ENCODE measurements at regions of chr19 and their contacts with region 1.

Region 1: GRCh38 chr19:47047763-47048405 is 540 bp downstream of the TMEM160 start:
- DNase-seq: peak; percentile 52
- ATAC-seq: peak; percentile 32
- H3K4me3 Mint-ChIP-seq: peak overlapping the region; percentile 95
- H3K27ac Mint-ChIP-seq: peak overlapping the region; percentile 89
- H3K4me1 Mint-ChIP-seq: peaks cover 15% of the 10 kb centered on the region
- H3K27me3 Mint-ChIP-seq: no peaks in the 10 kb centered on the region
- CTCF ChIP-seq: no peak

Region 2: DNA sequence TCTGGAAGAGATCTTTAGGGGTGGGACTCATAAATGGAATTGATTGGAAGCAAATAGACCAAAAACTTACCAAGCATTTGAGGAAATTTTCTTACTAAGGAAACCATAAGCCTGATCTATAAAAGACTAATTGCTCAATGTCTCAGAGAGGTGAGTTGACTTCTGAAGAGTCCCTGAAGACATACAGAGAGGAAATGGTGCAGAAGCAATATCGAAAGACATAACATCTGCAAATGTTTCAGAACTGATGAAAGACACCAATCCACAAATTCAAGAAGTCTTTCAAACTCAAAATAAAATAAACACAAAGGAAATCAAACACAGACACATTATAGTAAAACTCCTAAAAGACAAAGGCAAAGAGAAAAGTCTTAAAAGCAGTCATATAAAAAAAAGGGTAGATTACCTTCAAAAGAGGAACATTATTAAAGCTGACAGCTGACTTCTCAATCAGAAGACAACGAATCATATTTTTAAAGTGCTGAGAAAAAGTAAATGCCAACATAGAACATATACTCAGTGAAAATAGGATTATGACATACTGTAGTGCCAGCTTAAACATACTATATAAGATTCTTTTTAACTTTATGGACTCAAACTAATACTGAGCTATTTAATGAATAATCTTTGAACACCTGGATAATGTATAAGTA is 492.1 kb before region 1 on chr19:
- CTCF ChIA-PET with region 1: no interaction called
- POLR2A ChIA-PET with region 1: no interaction called
- intact Hi-C with region 1: no loop called
- DNase-seq: no peak
- ATAC-seq: no peak
- H3K4me3 Mint-ChIP-seq: no peak overlapping the region
- H3K27ac Mint-ChIP-seq: no peak overlapping the region
- H3K4me1 Mint-ChIP-seq: no peaks in the 10 kb centered on the region
- H3K27me3 Mint-ChIP-seq: peaks cover 12% of the 10 kb centered on the region
- CTCF ChIP-seq: no peak

Region 3: DNA sequence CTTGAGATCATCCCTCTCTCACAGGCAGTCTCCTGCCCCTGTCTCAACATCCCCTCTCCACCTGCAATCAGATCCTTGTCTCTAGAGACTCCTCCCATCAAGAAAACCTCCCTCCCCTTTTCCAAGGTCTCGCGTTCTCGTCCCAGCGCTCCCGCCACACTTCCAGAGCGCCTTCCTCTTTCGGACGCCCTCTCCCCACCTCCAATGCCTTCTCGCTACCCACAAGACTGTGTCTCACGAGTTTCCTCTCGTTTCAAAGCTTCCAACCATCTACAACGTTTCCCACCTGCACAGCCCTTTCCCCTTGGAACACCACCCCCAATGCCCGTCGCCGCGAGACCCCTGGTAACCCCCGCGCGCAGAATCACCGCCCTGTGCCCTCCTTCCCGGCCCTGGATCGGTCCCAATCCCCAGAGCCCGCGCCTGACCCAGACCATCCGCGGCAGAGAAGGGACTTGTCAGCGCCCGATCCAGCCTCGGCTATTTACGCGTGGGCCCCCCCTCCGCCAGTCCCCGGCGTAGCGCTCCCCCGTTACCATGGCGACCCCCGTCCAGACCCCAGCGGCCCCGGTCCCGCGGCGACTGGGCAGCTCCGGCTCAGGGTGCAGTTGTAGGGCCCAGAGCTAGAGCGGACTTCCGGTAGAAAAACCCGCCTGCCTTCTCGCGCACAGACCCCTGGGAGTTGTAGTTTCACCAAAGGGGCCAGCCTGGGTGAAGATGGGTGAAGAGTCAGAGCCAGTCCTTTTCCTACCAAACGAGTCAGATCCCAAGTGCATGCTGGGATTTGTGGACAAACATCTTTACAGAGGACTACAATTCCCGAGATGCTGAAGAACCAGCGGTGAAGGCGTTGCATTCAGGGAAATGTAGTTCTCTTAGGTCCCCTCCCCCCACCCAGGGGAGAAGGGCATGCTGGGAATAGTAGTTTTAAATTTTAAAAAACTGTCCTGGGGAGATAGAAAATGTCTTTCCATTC is 197.4 kb before region 1 on chr19 and contains the start of gene AP2S1:
- CTCF ChIA-PET with region 1: no interaction called
- POLR2A ChIA-PET with region 1: no interaction called
- intact Hi-C with region 1: loop called (anchors 1 kb)
- DNase-seq: peak; percentile 84
- ATAC-seq: peak; percentile 91
- H3K4me3 Mint-ChIP-seq: peak within 1 kb of the TSS; percentile 96
- H3K27ac Mint-ChIP-seq: peak within 1 kb of the TSS; percentile 82
- H3K4me1 Mint-ChIP-seq: peaks cover 37% of the 10 kb centered on the region
- H3K27me3 Mint-ChIP-seq: no peaks in the 10 kb centered on the region
- CTCF ChIP-seq: no peak
- total RNA-seq, gene AP2S1: 74.7 and 81.3 TPM in 2 replicates

Region 4: DNA sequence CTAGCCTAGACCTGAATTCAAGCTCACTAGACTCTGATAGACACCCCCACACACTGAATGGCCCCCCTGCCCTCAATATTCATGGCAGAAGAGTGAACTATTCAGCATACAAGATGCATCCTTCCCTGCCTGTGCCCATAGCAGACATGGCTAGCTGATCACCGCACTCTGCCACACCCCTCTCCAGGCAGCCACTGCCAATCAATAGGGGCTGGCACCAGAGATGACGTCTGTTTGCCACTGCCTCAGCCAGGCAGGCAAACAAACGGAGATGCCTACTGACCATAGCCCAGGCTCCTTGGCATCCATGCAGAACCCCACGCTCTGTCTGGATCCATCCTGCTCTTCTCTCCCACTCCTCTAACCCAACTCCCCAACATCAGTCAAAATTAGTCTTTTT is 42.0 kb before region 1 on chr19:
- CTCF ChIA-PET with region 1: no interaction called
- POLR2A ChIA-PET with region 1: no interaction called
- intact Hi-C with region 1: no loop called
- DNase-seq: no peak
- ATAC-seq: no peak
- H3K4me3 Mint-ChIP-seq: no peak overlapping the region
- H3K27ac Mint-ChIP-seq: no peak overlapping the region
- H3K4me1 Mint-ChIP-seq: no peaks in the 10 kb centered on the region
- H3K27me3 Mint-ChIP-seq: no peaks in the 10 kb centered on the region
- CTCF ChIP-seq: no peak

Region 5: DNA sequence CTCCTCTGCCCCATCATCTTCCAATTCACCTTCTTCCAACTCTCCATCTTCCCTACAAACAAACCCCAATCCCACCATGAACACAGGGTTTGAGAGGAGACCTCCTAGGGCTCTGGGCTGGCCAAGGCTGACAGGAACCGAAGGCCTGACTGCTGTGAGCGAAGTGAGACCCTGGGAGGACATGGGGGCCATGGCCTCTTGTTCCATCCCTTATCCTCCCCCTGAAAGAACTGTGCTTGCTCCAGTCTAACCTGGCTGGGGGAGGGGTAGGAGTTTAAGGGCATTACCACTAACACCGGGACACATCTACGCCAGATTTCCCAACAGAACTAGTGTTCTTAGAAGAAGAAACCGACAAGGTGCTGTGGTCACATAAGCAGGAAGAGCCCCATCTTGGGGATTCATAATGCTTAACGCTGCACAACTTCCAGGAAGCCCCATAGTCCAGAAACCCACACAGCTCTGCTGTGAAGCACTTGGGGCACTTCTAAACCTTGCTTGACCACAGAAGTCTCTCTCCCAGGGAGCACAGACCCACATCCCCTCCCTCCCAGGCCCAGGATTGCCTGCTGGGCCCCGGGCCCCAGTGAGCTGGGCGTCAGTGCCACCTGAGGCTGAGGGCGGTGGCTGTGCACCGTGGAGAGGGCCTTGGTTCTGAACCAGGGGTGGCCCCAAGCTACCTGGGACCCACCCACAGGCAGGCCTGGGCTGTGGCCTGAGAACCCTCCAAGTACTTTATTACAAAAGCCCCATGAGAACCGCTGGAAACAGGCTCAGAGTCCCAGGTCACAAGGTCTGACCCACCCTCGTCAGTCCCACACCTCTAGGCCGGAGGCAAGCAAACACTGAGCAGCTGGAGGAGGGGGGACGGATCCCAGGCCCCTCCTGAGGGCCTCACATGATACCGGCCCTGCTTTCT is 46.9 kb after region 1 on chr19:
- CTCF ChIA-PET with region 1: no interaction called
- POLR2A ChIA-PET with region 1: no interaction called
- intact Hi-C with region 1: no loop called
- DNase-seq: no peak
- ATAC-seq: no peak
- H3K4me3 Mint-ChIP-seq: peak overlapping the region; percentile 55
- H3K27ac Mint-ChIP-seq: peak overlapping the region; percentile 68
- H3K4me1 Mint-ChIP-seq: peaks cover 44% of the 10 kb centered on the region
- H3K27me3 Mint-ChIP-seq: no peaks in the 10 kb centered on the region
- CTCF ChIP-seq: no peak

Region 6: DNA sequence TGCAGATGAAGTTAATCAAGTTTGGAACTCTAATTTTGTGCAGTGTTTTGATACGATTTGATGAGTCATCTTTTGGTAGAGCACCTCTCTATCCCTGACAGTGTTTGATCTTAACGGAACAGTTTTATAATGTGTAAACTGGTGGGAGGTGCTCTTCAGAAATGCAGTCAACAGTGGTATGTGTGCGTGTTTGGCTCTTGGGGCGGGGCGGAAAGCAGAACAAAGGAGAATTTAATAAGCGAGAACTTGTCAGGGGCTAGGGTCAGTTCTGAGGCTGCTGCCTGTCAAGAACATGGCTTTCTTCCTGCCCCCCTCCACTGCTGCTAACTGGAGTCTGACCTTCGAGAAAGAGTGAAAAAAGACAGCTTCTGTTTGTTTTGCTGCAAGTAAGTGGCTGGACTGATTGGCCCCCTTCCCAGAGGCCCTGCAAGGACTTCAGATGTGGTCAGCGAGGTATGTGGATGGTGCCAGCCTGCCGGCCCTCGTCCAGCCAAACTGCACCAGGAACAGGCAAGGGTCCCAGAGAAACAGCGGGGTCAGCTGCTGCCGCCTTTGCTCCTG is 142.4 kb after region 1 on chr19:
- CTCF ChIA-PET with region 1: no interaction called
- POLR2A ChIA-PET with region 1: no interaction called
- intact Hi-C with region 1: no loop called
- DNase-seq: no peak
- ATAC-seq: no peak
- H3K4me3 Mint-ChIP-seq: no peak overlapping the region
- H3K27ac Mint-ChIP-seq: no peak overlapping the region
- H3K4me1 Mint-ChIP-seq: peaks cover 20% of the 10 kb centered on the region
- H3K27me3 Mint-ChIP-seq: no peaks in the 10 kb centered on the region
- CTCF ChIP-seq: no peak